ENCODE measurements at regions of chr11 and their contacts with region 1.

Region 1: GRCh38 chr11:111429066-111429506 is 50.0 kb upstream of the POU2AF1 start:
- DNase-seq: peak; percentile 88
- H3K4me3 Mint-ChIP-seq: no peak overlapping the region
- H3K27ac Mint-ChIP-seq: no peak overlapping the region
- H3K4me1 Mint-ChIP-seq: no peaks in the 10 kb centered on the region
- H3K27me3 Mint-ChIP-seq: no peaks in the 10 kb centered on the region

Region 2: GRCh38 chr11:110349138-110349996 is 1079.7 kb before region 1 on chr11:
- CTCF ChIA-PET with region 1: no interaction called
- intact Hi-C with region 1: no loop called
- DNase-seq: peak; percentile 91
- H3K4me3 Mint-ChIP-seq: peak overlapping the region; percentile 14
- H3K27ac Mint-ChIP-seq: peak overlapping the region; percentile 97
- H3K4me1 Mint-ChIP-seq: peaks cover 67% of the 10 kb centered on the region
- H3K27me3 Mint-ChIP-seq: no peaks in the 10 kb centered on the region

Region 3: DNA sequence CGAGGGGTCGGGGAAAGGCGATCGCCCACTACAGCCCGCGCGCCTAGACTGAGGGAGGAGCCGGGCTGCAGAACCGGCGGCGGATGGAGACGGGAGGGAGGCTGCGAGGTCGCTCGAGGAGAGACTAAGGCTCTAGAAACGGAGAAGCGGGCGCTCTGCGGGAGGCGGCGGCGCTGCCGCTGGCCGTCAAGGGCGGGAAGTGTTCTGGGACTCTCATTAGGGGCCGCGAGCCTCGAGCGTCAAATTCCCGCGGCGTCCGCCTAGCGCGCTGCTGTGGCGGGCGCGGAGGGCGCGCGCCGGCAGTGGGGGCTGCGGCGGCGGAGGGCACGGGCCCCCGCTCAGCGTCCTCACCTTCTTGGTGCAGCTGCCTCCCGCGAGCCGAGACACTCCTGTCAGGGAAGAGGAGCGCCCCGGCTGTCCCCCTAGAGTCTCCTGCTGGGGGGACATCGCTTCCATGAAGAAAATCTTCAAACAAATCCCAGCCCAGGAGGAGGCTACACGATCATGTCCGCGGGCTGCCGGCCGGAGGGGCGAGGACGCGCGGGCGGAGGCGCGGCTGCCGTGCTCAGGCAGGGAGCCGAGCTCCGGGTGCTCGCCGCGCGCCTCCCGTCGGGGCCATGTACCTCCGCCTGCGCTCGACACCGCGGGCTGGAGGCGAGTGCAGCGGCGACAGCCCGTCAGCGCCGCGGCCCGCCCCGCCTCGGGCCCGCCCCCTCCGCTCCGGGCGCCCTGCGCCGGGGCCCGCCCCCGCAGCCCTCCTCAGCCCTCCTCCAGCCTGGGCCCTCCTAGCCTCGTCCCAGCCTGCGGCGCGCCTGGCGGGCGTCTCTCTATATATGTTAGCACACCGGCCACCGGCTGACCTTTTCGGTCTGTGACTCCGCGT is 717.1 kb before region 1 on chr11 and contains the start of gene ARHGAP20:
- CTCF ChIA-PET with region 1: no interaction called
- intact Hi-C with region 1: loop called (anchors 5 kb)
- DNase-seq: peak; percentile 59
- H3K4me3 Mint-ChIP-seq: peak within 1 kb of the TSS; percentile 70
- H3K27ac Mint-ChIP-seq: no peak within 1 kb of the TSS
- H3K4me1 Mint-ChIP-seq: peaks cover 14% of the 10 kb centered on the region
- H3K27me3 Mint-ChIP-seq: peaks cover 48% of the 10 kb centered on the region
- total RNA-seq, gene ARHGAP20: 0.19 to 0.22 TPM

Region 4: DNA sequence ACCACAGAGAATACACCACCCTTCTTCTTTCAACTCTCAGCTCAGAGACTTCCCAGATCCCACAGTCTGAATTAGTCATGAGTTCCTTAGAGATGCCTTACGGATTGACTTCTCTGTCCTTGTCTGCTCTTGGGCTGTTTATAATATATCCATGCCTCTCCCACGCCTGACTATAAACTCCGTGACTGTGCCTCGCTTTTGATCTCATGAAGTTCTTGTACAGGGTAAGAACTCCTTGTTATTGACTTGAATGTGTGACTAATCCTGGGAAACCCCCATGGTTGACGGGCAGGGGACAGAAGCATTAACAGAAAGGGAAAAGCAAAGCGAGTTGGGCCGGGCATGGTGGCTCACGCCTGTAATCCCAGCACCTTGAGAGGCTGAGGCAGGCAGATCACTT is 12.4 kb after region 1 on chr11:
- CTCF ChIA-PET with region 1: interaction called, 49 read pairs
- intact Hi-C with region 1: loop called (anchors 2 kb)
- DNase-seq: peak; percentile 35
- H3K4me3 Mint-ChIP-seq: no peak overlapping the region
- H3K27ac Mint-ChIP-seq: no peak overlapping the region
- H3K4me1 Mint-ChIP-seq: peaks cover 20% of the 10 kb centered on the region
- H3K27me3 Mint-ChIP-seq: peaks cover 1% of the 10 kb centered on the region

Measured in activated naive CD4-positive, alpha-beta T cell treated with anti-CD3 and anti-CD28 coated beads for 36 hours (primary cell).